T-cell (primary cell): ENCODE measurements at regions of chr13 and their contacts with region 1.

Region 1: DNA sequence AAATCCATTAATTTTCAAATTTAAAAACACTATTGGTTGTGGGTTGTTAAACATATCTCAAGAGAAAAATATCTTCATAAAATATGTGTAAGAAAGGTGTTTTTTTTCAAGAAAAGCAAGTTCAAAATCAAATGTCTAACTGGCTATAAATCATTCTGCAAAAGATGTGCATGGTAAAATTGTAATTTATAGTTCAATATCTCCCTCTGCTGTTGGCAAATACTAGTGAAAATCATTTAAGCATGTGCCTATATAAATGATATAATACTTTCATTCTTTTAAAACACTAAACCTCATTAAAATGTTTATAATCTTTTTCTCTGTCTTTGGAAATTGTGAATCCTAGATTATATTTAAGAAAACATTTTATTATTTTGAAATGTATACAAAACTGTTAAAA is 17.2 kb upstream of the SLITRK6 start:
- DNase-seq: no peak
- ATAC-seq: no peak
- H3K4me3 ChIP-seq: no peak overlapping the region
- H3K4me3 Mint-ChIP-seq: no peak overlapping the region
- H3K27ac ChIP-seq: no peak overlapping the region
- H3K27ac Mint-ChIP-seq: no peak overlapping the region
- H3K4me1 ChIP-seq: no peaks in the 10 kb centered on the region
- H3K4me1 Mint-ChIP-seq: no peaks in the 10 kb centered on the region
- H3K27me3 ChIP-seq: no peaks in the 10 kb centered on the region
- H3K27me3 Mint-ChIP-seq: no peaks in the 10 kb centered on the region

Region 2: DNA sequence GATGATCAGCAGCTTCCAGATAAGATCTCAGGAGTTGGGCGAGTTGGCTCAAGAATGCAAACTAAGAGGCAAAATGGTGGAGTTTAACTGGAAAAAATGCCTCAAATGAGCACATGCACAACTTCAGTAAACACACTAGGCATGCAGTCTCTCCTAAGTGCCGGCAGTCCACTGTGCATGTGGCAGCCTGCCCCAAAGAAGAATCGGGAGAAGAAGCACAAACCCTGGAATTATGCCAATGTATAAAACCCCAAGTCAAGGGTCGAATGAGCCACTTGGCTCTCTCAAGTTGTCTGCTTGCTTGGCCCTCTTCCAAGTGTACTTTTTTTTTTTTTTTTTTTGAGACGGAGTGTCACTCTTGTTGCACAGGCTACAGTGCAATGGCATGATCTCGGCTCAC is 1880.8 kb before region 1 on chr13:
- CTCF ChIA-PET with region 1: no interaction called
- POLR2A ChIA-PET with region 1: interaction called in 1 of 2 experiments, 10 read pairs
- DNase-seq: no peak
- ATAC-seq: no peak
- H3K4me3 ChIP-seq: no peak overlapping the region
- H3K4me3 Mint-ChIP-seq: no peak overlapping the region
- H3K27ac ChIP-seq: no peak overlapping the region
- H3K27ac Mint-ChIP-seq: no peak overlapping the region
- H3K4me1 ChIP-seq: no peaks in the 10 kb centered on the region
- H3K4me1 Mint-ChIP-seq: no peaks in the 10 kb centered on the region
- H3K27me3 ChIP-seq: no peaks in the 10 kb centered on the region
- H3K27me3 Mint-ChIP-seq: no peaks in the 10 kb centered on the region

Region 3: GRCh38 chr13:85828149-85828548 is 11.7 kb after region 1 on chr13:
- CTCF ChIA-PET with region 1: no interaction called
- POLR2A ChIA-PET with region 1: no interaction called
- DNase-seq: peak in 1 of 35 experiments; percentile 16
- ATAC-seq: no peak
- H3K4me3 ChIP-seq: no peak overlapping the region
- H3K4me3 Mint-ChIP-seq: no peak overlapping the region
- H3K27ac ChIP-seq: no peak overlapping the region
- H3K27ac Mint-ChIP-seq: no peak overlapping the region
- H3K4me1 ChIP-seq: no peaks in the 10 kb centered on the region
- H3K4me1 Mint-ChIP-seq: no peaks in the 10 kb centered on the region
- H3K27me3 ChIP-seq: no peaks in the 10 kb centered on the region
- H3K27me3 Mint-ChIP-seq: no peaks in the 10 kb centered on the region

Region 4: DNA sequence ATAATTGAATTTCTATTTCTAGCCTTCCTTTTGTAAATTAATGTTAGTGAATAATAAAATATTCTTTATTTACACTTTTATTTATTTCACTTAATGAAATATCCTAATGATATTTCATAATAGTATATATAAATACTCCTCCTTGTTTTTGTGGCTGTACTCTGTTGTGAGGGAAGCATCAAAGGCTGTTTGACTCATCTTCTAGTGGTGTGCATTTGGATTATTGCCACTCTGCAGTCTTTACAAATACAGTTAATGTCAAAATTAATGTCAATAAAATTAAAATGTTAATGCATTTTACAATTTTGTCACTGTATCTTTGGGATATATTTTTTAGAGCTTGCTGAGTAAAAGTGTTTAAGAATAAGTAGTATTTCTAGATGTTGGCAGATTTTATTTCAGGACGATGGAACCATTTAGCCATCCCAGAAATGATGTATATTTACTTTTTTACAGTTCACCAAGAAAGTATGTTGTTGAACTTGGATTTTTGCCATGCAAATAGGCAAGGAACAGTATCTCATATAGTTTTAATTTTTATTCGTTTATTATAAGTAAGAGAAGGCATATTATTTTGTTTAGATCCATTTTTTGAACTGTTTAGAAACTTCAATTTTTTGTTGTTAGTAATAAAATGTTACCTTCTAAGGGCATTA is 264.1 kb after region 1 on chr13:
- CTCF ChIA-PET with region 1: no interaction called
- POLR2A ChIA-PET with region 1: no interaction called
- DNase-seq: no peak
- ATAC-seq: no peak
- H3K4me3 ChIP-seq: no peak overlapping the region
- H3K4me3 Mint-ChIP-seq: no peak overlapping the region
- H3K27ac ChIP-seq: no peak overlapping the region
- H3K27ac Mint-ChIP-seq: no peak overlapping the region
- H3K4me1 ChIP-seq: no peaks in the 10 kb centered on the region
- H3K4me1 Mint-ChIP-seq: no peaks in the 10 kb centered on the region
- H3K27me3 ChIP-seq: no peaks in the 10 kb centered on the region
- H3K27me3 Mint-ChIP-seq: no peaks in the 10 kb centered on the region